ENCODE measurements at regions of chr4 and their contacts with region 1.

Region 1: GRCh38 chr4:75708218-75708691 is 16.1 kb upstream of the USO1 start:
- DNase-seq: peak in 1 of 2 experiments; percentile 40
- H3K4me3 ChIP-seq: no peak overlapping the region
- H3K4me3 Mint-ChIP-seq: no peak overlapping the region
- H3K27ac Mint-ChIP-seq: no peak overlapping the region
- H3K4me1 ChIP-seq: peaks cover 13% of the 10 kb centered on the region
- H3K4me1 Mint-ChIP-seq: peaks cover 8% of the 10 kb centered on the region
- H3K27me3 ChIP-seq: no peaks in the 10 kb centered on the region
- H3K27me3 Mint-ChIP-seq: no peaks in the 10 kb centered on the region
- CTCF ChIP-seq: peak; percentile 6 to 43

Region 2: GRCh38 chr4:75565481-75565880 is 142.8 kb before region 1 on chr4:
- CTCF ChIA-PET with region 1: no interaction called
- POLR2A ChIA-PET with region 1: no interaction called
- intact Hi-C with region 1: no loop called
- DNase-seq: no peak
- H3K4me3 ChIP-seq: no peak overlapping the region
- H3K4me3 Mint-ChIP-seq: no peak overlapping the region
- H3K27ac Mint-ChIP-seq: no peak overlapping the region
- H3K4me1 ChIP-seq: peaks cover 17% of the 10 kb centered on the region
- H3K4me1 Mint-ChIP-seq: peaks cover 7% of the 10 kb centered on the region
- H3K27me3 ChIP-seq: no peaks in the 10 kb centered on the region
- H3K27me3 Mint-ChIP-seq: no peaks in the 10 kb centered on the region
- CTCF ChIP-seq: no peak

Region 3: DNA sequence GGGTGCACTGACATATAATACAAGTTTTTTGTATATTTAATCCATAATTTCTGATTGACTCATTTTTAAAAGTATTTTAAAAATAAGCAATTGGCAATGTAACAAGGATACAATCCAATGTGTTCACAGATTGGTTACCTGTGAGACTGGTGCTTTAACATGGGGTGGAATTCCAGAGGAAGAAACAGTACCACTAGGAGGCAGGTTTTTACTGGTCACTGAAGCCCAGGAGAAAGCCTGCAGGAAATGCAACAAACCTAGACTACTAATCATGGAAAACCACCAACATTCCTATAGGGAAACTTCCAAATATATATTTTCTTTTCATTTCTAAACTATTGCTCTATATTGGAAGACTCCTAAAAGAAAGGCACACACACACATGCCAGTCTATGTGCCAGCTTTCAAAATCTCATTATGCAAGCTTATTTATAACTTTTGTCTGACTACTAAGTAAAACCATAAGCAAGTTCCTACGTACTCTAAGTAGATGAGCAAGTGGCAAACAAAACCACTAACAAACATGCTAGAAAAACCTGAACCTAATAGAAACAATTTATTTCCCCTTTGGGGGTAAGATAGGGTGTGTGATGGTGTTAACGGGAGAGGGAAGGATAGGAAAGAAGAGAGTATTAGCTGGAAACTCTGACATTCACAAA is 54.3 kb before region 1 on chr4:
- CTCF ChIA-PET with region 1: interaction called, 3 read pairs
- POLR2A ChIA-PET with region 1: no interaction called
- intact Hi-C with region 1: loop called (anchors 1 kb)
- DNase-seq: peak in 1 of 2 experiments; percentile 56
- H3K4me3 ChIP-seq: no peak overlapping the region
- H3K4me3 Mint-ChIP-seq: no peak overlapping the region
- H3K27ac Mint-ChIP-seq: no peak overlapping the region
- H3K4me1 ChIP-seq: peaks cover 37% of the 10 kb centered on the region
- H3K4me1 Mint-ChIP-seq: peaks cover 6% of the 10 kb centered on the region
- H3K27me3 ChIP-seq: no peaks in the 10 kb centered on the region
- H3K27me3 Mint-ChIP-seq: no peaks in the 10 kb centered on the region
- CTCF ChIP-seq: peak; percentile 43 to 67

Region 4: DNA sequence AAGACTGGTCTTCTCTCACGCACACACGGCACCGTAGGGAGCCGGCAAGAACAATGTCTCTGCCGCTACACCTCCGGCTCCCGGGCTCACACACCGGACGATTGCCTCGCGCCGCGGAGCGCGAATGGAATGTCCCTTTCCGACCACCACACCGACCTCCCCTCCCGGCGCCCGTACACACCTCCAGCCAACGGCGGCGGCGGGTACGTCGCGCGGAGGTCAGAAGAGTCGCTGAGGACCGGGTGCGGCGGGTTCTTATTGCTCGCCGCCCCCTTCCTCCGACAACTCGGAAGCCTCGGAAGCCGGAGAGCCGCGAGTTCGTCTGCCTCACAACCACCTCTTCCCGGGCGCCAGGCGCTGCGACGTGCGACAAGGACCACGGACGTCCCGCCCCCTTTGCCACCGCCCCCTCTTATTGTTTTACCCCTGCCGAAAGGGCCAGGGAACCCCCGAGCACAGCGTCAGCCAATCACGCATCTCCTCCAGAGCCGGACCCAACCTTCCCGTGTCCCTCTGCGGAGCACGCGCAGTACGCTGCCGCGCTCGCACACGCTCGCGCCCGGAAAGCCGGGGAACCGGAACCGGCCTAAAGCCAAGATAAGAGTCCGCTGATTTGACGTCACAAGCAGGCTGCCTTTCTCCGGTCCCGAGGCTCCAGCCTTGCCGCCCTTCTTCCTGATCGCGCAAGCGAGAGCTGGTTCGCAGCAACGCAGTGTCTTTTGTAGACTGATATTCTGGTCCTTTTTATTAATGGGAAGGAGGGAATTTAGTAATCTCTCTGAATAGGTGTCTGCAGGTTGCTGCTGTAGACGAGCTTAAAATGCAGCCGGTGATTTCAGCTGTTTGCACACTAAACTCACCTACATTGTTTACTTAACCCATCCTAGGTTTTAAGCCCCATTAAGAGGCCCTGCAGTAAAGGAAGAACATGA is 35.0 kb before region 1 on chr4 and contains the start of gene G3BP2:
- CTCF ChIA-PET with region 1: no interaction called
- POLR2A ChIA-PET with region 1: no interaction called
- intact Hi-C with region 1: loop called (anchors 5 kb)
- DNase-seq: peak; percentile 97 to 98
- H3K4me3 ChIP-seq: peak within 1 kb of the TSS; percentile 76
- H3K4me3 Mint-ChIP-seq: peak within 1 kb of the TSS; percentile 96
- H3K27ac Mint-ChIP-seq: peak within 1 kb of the TSS; percentile 99
- H3K4me1 ChIP-seq: peaks cover 24% of the 10 kb centered on the region
- H3K4me1 Mint-ChIP-seq: peaks cover 20% of the 10 kb centered on the region
- H3K27me3 ChIP-seq: no peaks in the 10 kb centered on the region
- H3K27me3 Mint-ChIP-seq: no peaks in the 10 kb centered on the region
- CTCF ChIP-seq: no peak
- total RNA-seq, gene G3BP2: 187 TPM in 2 replicates